ENCODE measurements at regions of chr4 and their contacts with region 1.

Region 1: DNA sequence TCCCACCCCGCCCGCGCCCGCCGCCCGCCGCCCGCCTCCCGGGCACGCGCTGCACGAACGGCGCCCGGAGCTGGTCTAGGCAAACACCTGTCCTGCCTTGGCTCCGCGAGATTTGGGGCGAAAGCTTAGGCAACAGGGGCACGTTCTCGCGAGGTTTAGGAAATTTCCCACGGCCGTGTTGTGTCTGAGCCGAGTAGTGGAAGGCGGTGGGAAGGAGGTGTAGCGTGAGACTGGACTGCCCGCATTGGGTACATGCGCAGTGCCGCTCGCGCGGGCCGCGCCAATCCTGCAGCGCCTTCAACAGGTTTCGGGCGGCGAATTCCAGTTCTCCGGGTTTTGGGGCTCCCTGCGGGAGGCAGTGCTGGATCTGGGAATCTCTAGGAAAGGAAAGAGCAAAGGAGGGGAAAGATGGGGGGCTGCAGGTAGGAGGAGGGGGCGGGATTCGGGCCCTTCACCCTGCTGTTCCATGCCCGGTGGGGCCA is 1.3 kb upstream of the RBPJ start:
- ATAC-seq: peak; percentile 64 to 83 (median 78)
- H3K4me3 ChIP-seq: peak overlapping the region; percentile 58 to 96 (median 85)
- H3K27ac ChIP-seq: peak overlapping the region; percentile 90 to 96
- H3K4me1 ChIP-seq: peaks cover 8 to 14% of the 10 kb centered on the region in 2 donors

Region 2: DNA sequence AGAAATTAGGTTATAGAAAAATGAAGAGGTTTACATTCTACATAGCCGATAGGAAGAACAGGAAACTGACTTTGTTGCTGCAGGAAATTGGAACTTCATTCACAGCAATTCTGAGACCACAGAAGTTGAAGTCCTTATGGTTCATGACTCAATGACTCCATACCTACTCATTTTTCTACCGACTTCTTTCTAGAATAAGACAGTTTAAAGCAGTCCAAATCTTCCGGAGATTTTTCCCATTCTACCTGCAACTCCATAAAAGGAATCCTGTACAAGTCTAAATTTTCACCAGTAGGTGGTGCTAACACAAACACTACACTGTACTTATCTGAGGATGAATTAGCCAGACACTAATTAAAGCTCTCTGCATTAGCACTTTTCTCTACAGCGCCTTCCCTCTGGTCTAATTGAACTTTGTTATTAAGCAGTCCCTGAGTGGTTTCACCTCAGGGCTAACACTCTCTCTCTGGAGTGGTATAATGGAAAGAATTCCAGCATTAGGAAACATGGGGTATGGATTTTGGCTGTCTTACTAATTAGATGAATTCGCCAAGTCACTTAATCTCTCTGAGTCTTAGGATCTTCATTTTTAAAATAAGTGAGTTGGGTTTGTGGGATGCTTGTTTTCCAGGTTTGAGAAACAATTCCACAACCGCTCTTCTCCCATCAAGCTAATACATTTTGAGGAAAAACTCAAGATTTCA is 237.6 kb before region 1 on chr4:
- in situ Hi-C with region 1: loop called in 1 of 9 experiments (anchors 25 kb)
- ATAC-seq: peak in 6 of 8 experiments; percentile 32 to 81 (median 58)
- H3K4me3 ChIP-seq: no peak overlapping the region
- H3K27ac ChIP-seq: no peak overlapping the region
- H3K4me1 ChIP-seq: peaks cover 0 to 8% of the 10 kb centered on the region in 2 donors